Activated naive CD4-positive, alpha-beta T cell treated with anti-CD3 and anti-CD28 coated beads for 36 hours (primary cell): ENCODE measurements at regions of chr2 and their contacts with region 1.

Region 1: DNA sequence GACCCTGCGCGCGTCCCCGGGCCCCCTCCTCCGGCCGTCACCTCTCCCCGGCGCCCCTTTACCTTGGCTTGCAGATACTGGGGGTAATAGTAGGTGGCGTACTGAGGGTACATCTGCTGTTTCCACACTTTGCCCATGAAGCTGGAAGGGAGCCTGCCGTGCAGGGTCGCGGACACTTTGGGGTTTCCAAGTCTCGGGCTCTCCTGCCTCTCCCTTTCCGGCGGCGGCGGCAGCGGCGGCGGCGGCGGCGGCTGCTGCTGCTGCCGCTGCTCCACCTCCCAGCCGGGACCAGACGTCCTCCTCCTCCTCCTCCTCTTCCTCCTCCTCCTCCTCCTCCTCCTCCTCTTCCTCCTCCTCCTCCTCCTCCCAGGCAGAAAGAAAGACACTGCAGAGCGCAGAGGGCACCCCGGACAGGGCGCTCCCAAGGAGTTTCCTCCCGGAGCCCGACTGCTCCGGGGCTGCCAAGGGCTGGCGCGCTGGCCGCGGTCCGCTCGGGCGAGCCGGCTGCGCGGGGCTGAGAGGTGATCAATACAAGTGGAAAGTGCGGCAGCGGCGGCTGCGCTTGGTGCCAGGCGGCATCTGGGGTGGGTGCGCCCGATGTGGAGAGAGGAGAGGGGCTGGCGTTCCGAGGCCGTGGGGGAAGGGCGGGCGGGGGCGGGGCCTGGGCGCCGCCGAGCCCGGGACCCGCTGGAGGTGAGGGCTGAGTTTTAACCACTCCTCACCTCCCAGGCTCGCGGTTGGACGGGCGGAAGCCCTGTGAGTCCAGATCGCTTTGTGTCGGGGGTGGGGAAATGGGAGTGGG is at the start of gene RBMS1:
- DNase-seq: peak; percentile 58
- H3K4me3 Mint-ChIP-seq: peak within 1 kb of the TSS; percentile 93
- H3K27ac Mint-ChIP-seq: peak within 1 kb of the TSS; percentile 93
- H3K4me1 Mint-ChIP-seq: peaks cover 43% of the 10 kb centered on the region
- H3K27me3 Mint-ChIP-seq: no peaks in the 10 kb centered on the region
- total RNA-seq, gene RBMS1: 27.8 to 29.1 TPM

Region 2: DNA sequence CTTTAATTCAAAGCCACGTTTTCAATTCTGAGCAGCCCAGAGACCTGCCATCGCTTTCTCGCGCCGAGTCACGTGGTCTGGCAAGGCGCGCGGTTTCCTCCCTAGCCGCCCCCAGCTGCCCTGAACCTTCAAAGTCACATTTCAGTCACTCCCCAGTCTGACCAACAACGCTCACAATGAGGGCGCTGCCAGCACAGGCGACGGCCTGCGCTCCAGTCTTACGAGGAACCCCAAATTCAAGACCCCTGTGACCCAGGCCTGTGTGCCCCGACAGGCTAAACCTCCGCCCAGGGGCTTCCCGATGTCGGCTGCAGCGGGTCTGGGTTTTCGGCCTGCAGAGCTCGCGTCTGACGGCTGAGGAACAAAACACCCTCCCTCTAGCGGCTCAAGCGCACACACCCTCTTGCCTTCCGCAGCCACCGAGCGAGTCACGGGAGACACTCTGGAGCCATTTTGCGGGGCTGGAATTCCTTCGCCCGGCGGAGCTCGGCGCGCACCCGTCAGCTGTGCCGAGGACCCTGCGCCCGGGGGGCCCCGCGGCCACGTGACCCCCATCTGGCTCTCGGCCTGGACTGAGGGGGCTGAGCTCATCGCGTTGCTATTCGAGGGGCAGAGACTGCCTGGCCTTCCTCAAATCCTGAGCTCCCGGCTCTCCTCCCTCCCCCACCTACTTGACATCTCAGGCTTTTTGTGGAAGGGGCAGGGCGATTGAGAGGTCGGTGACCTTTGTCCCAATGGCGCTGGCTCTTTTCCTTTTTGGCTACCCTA is 223.4 kb before region 1 on chr2:
- CTCF ChIA-PET with region 1: no interaction called
- intact Hi-C with region 1: loop called (anchors 5 kb)
- DNase-seq: peak; percentile 64
- H3K4me3 Mint-ChIP-seq: peak overlapping the region; percentile 65
- H3K27ac Mint-ChIP-seq: peak overlapping the region; percentile 53
- H3K4me1 Mint-ChIP-seq: peaks cover 39% of the 10 kb centered on the region
- H3K27me3 Mint-ChIP-seq: no peaks in the 10 kb centered on the region

Region 3: DNA sequence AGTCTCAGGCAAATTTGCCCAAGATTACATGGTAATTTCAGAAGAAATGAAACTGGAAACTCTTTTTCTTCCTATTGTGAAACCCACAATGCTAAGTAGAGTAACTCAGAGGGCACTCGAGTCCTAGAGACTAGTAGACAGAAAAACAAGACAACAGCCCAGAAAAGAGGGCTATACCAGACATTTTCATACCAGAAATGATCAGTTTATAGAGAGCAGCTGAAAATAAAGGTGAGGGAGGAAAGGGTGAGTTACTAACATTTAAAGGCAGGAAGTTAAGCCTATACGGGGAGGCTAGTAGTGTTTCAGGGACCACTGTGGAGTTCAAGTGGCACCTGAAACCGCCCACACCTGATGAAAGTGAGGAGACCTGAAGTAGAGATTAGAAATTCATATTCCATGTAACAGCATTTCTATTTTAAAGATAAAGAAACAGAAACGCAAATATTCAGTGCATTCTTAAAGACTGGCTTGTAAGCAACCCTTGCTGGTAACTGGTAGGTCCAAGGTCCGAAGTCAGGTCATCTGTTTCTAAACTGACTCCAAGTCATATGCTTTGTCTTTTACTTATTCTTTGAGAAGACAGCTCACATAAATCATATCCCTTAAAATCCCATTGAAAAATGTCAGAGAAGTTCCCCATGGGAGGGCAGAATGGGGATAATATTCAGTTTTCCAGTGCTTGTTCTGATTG is 148.2 kb before region 1 on chr2:
- CTCF ChIA-PET with region 1: no interaction called
- intact Hi-C with region 1: loop called (anchors 2 kb)
- DNase-seq: no peak
- H3K4me3 Mint-ChIP-seq: peak overlapping the region; percentile 51
- H3K27ac Mint-ChIP-seq: peak overlapping the region; percentile 66
- H3K4me1 Mint-ChIP-seq: peaks cover 69% of the 10 kb centered on the region
- H3K27me3 Mint-ChIP-seq: no peaks in the 10 kb centered on the region

Region 4: GRCh38 chr2:160465406-160465805 is 28.0 kb before region 1 on chr2:
- CTCF ChIA-PET with region 1: no interaction called
- intact Hi-C with region 1: loop called (anchors 1 kb)
- DNase-seq: peak; percentile 55
- H3K4me3 Mint-ChIP-seq: no peak overlapping the region
- H3K27ac Mint-ChIP-seq: peak overlapping the region; percentile 25
- H3K4me1 Mint-ChIP-seq: peaks cover 81% of the 10 kb centered on the region
- H3K27me3 Mint-ChIP-seq: no peaks in the 10 kb centered on the region

Region 5: GRCh38 chr2:160482673-160483072 is 10.8 kb before region 1 on chr2:
- CTCF ChIA-PET with region 1: interaction called, 3 read pairs
- intact Hi-C with region 1: loop called (anchors 1 kb)
- DNase-seq: peak; percentile 46
- H3K4me3 Mint-ChIP-seq: peak overlapping the region; percentile 47
- H3K27ac Mint-ChIP-seq: peak overlapping the region; percentile 85
- H3K4me1 Mint-ChIP-seq: peaks cover 71% of the 10 kb centered on the region
- H3K27me3 Mint-ChIP-seq: no peaks in the 10 kb centered on the region

Region 6: DNA sequence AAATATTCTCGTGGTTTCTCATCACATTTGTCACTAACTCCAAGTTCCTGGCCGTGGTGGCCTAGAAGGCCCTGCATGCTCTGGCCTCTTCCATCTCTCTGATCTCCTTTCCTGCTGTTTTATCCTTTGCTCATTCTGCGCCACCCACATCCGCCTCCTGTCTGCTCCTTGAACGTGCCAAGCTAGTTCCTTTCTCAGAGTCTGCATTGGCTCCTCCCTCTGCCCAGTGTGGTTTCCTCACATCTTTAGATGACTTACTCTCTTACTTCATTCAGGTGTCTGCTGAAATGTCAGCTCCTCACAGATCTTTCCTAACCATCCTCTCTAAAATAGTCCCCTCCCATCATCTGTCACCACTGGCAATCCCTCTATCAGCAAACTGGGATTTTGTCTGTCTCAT is 158.8 kb after region 1 on chr2:
- CTCF ChIA-PET with region 1: no interaction called
- intact Hi-C with region 1: loop called (anchors 5 kb)
- DNase-seq: peak; percentile 87
- H3K4me3 Mint-ChIP-seq: no peak overlapping the region
- H3K27ac Mint-ChIP-seq: peak overlapping the region; percentile 17
- H3K4me1 Mint-ChIP-seq: peaks cover 30% of the 10 kb centered on the region
- H3K27me3 Mint-ChIP-seq: no peaks in the 10 kb centered on the region